ENCODE measurements at regions of chr6 and their contacts with region 1.

Region 1: GRCh38 chr6:112044856-112045255 is 9.0 kb upstream of the CCN6 start:
- DNase-seq: no peak
- H3K4me3 ChIP-seq: no peak overlapping the region
- H3K27ac ChIP-seq: no peak overlapping the region
- H3K4me1 ChIP-seq: no peaks in the 10 kb centered on the region
- H3K27me3 ChIP-seq: no peaks in the 10 kb centered on the region
- CTCF ChIP-seq: no peak
- POLR2A ChIP-seq: no peak

Region 2: DNA sequence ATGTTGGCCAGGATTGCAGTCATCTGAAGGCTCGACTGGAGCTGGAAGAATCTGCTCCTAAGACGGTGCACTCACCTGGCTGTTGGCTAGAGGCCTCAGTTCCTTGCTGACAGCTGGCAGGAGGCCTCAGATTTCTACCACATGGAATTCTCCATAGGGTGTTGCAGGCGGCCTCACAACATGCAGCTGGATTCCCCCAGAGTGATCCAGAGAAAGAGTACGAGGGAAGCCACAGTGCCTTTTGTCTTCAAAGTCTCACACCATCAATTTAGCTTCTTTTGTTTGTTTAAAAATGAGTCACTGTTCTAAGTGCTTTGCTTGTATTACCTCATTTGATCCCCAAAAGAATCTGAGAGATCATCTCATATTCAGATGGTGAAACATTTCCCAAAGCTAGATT is 106.1 kb before region 1 on chr6:
- intact Hi-C with region 1: no loop called
- DNase-seq: no peak
- H3K4me3 ChIP-seq: no peak overlapping the region
- H3K27ac ChIP-seq: no peak overlapping the region
- H3K4me1 ChIP-seq: no peaks in the 10 kb centered on the region
- H3K27me3 ChIP-seq: no peaks in the 10 kb centered on the region
- CTCF ChIP-seq: no peak
- POLR2A ChIP-seq: no peak

Region 3: DNA sequence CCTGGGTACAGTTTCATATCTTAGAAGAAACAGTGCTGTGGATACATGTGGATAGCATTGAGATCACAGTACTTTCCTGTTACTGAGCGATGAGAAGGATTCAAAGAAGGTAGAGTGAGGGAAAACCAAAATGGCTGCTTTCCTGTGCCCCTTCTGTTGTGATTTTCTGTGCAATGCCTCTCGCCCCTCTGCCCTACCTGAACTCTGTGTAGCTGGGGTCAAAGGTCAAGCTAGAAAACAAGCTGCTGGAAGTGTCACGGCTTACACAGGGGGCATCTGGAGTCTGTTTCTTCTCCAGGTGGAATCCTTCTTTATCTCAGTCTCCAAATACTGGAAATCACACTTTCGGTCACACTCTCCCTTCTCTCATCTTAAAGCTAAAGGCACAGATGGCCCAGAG is 17.9 kb before region 1 on chr6:
- intact Hi-C with region 1: loop called (anchors 1 kb)
- DNase-seq: no peak
- H3K4me3 ChIP-seq: no peak overlapping the region
- H3K27ac ChIP-seq: no peak overlapping the region
- H3K4me1 ChIP-seq: no peaks in the 10 kb centered on the region
- H3K27me3 ChIP-seq: no peaks in the 10 kb centered on the region
- CTCF ChIP-seq: no peak
- POLR2A ChIP-seq: no peak